ENCODE measurements at regions of chr18 and their contacts with region 1.

Region 1: GRCh38 chr18:58529714-58530354 is 99.1 kb downstream of the ALPK2 start:
- DNase-seq: peak; percentile 58 to 77
- ATAC-seq: peak; percentile 32

Region 2: GRCh38 chr18:58287353-58288274 is 242.2 kb before region 1 on chr18:
- intact Hi-C with region 1: no loop called
- DNase-seq: peak; percentile 58 to 73
- ATAC-seq: peak; percentile 83

Region 3: DNA sequence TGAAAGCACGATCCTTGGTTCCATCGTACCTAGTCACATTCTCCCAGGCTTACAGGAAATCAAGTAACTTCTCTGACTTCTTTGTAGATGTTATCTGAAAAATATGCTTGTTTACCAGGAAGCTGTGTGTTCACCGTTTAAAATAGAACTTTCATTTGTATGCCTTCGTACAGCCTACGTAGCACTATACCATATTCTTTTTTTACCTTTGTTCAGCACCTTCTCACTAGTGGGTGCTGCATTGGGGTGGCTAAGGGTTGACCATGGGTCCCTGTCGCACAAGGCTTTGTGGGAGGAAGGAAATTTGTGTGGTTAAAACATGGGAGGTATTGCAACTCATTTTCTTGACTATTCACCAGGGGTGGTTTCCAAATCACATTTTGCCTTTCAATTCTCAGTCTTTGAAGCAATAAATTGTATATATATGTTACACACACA is 158.1 kb after region 1 on chr18:
- intact Hi-C with region 1: no loop called
- DNase-seq: no peak
- ATAC-seq: no peak

Region 4: DNA sequence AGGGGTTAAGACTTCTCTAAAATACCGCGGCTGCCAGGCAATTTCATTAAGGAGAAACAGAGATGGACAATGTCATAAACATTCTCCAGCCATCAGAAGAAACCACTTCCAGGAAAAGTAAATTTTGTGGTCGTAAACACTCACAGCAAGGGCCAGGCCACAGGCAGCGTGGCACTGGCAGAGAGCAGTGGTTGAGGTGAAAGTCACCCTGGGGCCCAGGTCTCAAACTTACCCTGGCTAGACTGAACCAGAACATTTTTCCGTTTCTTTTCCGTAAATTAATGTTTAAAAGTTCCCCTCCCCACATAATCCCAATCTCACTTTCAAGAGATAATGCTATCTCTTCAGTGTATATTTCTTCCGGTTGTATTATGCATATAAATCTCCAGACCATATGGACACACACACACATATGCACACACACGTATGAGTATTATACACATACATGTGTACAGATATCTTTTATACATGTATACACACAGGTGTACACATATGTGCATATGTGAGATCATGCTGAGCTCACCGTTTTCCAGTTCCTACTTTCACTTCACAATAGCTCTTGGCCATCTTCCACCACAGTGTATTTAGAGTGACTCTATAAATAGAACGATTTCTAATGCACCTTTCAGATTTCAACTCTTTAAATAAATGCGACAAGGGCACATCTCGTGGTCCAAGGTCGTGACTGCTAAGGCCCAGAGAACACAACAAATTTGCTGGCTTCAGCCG is 231.6 kb after region 1 on chr18:
- intact Hi-C with region 1: loop called (anchors 2 to 5 kb)
- DNase-seq: no peak
- ATAC-seq: no peak

Region 5: GRCh38 chr18:58768293-58768974 is 238.6 kb after region 1 on chr18:
- intact Hi-C with region 1: loop called (anchors 2 to 5 kb)
- DNase-seq: peak; percentile 45 to 85
- ATAC-seq: peak; percentile 92

Region 6: DNA sequence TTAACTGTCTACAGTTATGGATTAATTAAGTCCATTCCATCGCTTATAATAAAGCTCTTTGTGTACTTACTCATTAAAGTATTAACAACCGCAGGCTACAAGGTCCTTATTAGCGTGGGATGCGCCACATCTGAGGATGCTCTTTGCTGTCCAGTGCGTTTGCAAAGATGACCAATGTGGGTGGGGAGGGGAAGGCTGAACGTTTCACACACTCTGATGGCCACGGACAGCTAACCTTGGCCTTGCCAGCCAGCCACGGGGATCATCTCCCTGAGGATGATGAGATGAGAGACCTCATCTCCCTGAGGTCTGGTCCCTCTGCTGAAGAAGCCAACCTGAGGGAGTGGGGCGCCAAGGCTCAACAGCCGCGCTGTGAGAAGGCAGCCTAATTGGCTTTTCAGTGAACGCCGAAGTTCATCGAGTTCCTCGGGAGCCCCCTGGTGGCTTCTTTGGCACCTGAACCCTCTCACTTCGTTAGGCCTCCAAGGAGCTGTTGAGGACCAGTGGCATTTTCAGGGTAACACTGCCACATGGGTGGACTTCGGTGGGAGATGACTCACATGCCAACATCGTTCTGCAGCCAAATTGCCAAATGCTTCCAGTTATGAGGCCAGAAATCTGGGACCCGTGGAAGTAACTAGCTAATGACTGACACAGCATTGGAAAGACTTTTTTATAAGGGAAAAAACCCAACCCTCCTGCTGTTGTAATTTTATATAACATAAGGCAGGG is 540.5 kb after region 1 on chr18:
- intact Hi-C with region 1: loop called in 1 of 2 experiments (anchors 10 kb)
- DNase-seq: peak; percentile 66 to 92
- ATAC-seq: peak; percentile 88

Measured in left colon (tissue), 2 donors.